Dorsolateral prefrontal cortex (tissue), 120 donors: ENCODE measurements at regions of chr17 and their contacts with region 1.

Region 1: DNA sequence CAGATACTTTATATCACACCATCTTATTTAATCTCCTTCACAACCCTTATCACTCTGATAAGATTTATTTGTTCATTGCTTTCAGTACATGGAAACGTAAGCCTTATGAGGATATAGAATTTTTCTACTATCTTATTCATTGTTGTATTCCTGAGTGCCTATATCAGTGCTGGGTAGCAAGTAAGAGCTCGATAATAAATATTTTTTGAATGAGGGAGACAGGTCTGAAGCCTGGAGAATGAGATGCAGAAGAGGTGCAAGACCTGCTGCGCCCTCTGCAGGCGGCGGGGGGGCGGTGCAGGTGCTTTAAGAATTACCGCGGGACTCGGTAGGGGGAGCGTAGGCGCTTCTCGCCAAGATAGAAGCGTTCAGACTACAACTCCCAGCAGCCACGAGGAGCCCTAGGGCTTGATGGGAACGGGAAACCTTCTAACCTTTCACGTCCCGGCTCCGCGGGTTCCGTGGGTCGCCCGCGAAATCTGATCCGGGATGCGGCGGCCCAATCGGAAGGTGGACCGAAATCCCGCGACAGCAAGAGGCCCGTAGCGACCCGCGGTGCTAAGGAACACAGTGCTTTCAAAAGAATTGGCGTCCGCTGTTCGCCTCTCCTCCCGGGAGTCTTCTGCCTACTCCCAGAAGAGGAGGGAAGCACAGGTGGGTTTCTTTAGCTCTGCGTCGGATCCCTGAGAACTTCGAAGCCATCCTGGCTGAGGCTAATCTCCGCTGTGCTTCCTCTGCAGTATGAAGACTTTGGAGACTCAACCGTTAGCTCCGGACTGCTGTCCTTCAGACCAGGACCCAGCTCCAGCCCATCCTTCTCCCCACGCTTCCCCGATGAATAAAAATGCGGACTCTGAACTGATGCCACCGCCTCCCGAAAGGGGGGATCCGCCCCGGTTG is at the start of gene WRAP53:
- DNase-seq: peak; percentile 97 to 99 (median 98)
- H3K4me3 ChIP-seq: peak within 1 kb of the TSS; percentile 59 to 99 (median 86)
- H3K27ac ChIP-seq: peak within 1 kb of the TSS; percentile 92 to 100 (median 100)
- H3K27me3 ChIP-seq: no peaks in the 10 kb centered on the region
- CTCF ChIP-seq: peak; percentile 94 to 100 (median 99)
- total RNA-seq, gene WRAP53: 5.1 to 15.5 (median 8.1) TPM

Region 2: DNA sequence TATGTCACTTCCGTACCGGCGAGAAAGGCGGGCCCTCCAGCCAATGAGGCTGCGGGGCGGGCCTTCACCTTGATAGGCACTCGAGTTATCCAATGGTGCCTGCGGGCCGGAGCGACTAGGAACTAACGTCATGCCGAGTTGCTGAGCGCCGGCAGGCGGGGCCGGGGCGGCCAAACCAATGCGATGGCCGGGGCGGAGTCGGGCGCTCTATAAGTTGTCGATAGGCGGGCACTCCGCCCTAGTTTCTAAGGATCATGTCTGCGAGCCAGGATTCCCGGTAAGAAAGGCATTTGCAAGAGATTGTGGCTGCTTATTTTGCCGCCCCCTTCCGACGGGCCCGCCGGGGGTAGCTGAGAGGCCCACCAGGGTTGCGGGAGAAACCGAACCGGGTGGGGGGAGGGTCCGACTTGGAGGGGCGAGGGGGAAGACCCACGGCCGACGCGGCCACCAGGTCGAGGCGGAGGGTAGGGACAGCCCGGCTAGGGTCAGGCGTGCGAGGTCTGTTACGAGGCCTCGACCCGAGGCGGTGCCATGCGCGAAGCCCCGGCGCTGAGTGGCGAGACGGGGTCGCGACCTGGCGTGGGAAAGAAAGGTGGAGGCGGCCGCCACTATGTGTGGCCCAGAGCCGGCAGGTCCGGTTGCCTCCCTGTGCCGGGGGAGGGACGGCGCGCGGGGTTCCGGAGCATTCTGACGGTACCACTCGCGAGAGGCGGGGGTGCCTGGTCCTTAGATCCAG is 115.4 kb before region 1 on chr17:
- intact Hi-C with region 1: loop called in 1 of 2 experiments (anchors 2 kb)
- DNase-seq: peak in 9 of 10 donors; percentile 99 to 100 (median 100)
- H3K4me3 ChIP-seq: peak overlapping the region; percentile 64 to 100 (median 99)
- H3K27ac ChIP-seq: peak overlapping the region; percentile 86 to 100 (median 98)
- H3K27me3 ChIP-seq: no peaks in the 10 kb centered on the region
- CTCF ChIP-seq: peak in 17 of 56 donors; percentile 4 to 42 (median 16)

Region 3: GRCh38 chr17:7614422-7615264 is 73.5 kb before region 1 on chr17 and contains the start of gene FXR2:
- intact Hi-C with region 1: loop called in 1 of 2 experiments (anchors 1 kb)
- DNase-seq: peak; percentile 99 to 100 (median 100)
- H3K4me3 ChIP-seq: peak within 1 kb of the TSS; percentile 70 to 97 (median 91)
- H3K27ac ChIP-seq: peak within 1 kb of the TSS; percentile 60 to 98 (median 93)
- H3K27me3 ChIP-seq: no peaks in the 10 kb centered on the region
- CTCF ChIP-seq: peak in 55 of 56 donors; percentile 31 to 86 (median 64)
- total RNA-seq, gene FXR2: 53.1 to 114 (median 73.7) TPM

Region 4: DNA sequence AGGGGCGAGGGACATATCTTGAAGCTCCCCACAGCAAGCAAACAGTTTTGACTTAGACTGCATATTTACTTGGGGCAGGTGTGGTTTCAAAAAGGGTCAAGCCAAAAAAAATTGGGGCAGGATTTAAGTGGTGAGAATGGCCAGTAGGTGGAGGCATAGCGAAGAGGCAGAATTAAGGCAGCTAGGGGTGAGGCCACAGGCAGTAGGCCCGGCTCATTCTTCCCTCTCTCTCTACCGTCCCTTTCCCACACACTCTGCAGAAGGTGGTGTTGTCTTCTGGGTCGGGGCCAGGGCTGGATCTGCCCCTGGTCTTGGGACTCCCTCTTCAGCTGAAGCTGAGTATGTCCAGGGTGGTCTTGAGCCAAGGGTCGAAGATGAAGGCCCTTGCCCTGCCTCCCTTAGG is 55.7 kb before region 1 on chr17:
- intact Hi-C with region 1: loop called (anchors 5 kb)
- DNase-seq: no peak
- H3K4me3 ChIP-seq: no peak overlapping the region
- H3K27ac ChIP-seq: peak overlapping the region in 15 of 59 donors; percentile 6 to 63 (median 41)
- H3K27me3 ChIP-seq: no peaks in the 10 kb centered on the region
- CTCF ChIP-seq: peak in 46 of 56 donors; percentile 16 to 62 (median 38)

Region 5: DNA sequence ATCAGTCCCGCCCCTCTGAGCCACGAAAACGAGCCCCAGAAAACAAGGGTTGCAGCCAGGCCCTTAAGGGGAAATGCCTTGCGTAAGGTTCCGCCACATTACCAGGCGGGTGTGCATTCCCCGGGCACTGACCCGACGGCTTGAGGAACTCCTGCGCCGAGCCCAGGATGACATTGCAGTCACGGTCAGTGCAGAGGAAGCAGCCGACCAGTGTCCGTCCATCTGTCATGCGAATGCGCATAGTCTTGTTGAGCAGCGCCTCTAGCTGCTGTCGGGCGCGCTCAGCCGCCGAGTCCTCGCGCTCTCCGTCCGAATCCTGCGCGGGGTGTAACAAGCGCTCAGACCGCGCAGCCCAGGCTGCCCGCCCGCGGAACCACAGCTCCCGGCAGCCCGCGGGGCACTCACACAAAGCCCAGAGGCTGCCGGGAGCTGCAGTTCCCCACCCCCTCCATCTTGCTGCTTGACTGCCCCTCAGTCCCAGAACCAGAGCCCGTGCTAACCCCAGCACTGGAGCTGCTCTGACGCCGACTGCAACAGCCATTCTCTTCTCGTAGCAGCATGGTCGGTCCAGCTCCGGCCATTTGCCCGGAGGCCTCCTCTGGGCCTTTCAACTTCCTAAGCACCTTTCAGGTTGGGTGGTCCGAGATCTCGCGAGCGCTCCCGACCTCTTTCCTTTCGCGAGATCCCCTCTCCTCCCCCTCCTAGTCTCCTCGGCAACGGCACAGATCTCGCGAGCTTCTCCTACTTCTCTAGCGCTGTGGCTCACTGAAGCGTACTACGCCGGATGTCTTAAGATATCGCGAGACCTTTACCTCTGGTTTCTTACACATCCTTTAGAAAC is 168.9 kb after region 1 on chr17 and contains the start of gene NAA38:
- intact Hi-C with region 1: loop called in 1 of 2 experiments (anchors 5 kb)
- DNase-seq: peak; percentile 91 to 99 (median 95)
- H3K4me3 ChIP-seq: peak within 1 kb of the TSS; percentile 63 to 99 (median 86)
- H3K27ac ChIP-seq: peak within 1 kb of the TSS; percentile 87 to 99 (median 97)
- H3K27me3 ChIP-seq: no peaks in the 10 kb centered on the region
- CTCF ChIP-seq: peak; percentile 29 to 83 (median 62)
- total RNA-seq, gene NAA38: 46.8 to 127 (median 87.8) TPM

Region 6: GRCh38 chr17:7931709-7932482 is 243.7 kb after region 1 on chr17 and contains the starts of genes CNTROB and TRAPPC1:
- intact Hi-C with region 1: no loop called
- DNase-seq: peak; percentile 99 to 100 (median 100)
- H3K4me3 ChIP-seq: peak within 1 kb of the TSS; percentile 73 to 99 (median 89)
- H3K27ac ChIP-seq: peak within 1 kb of the TSS in 53 of 59 donors; percentile 6 to 93 (median 75)
- H3K27me3 ChIP-seq: no peaks in the 10 kb centered on the region
- CTCF ChIP-seq: peak in 23 of 56 donors; percentile 10 to 51 (median 23)
- total RNA-seq, gene CNTROB: 13.4 to 35.9 (median 20.7) TPM
- total RNA-seq, gene TRAPPC1: 58.5 to 141 (median 98.0) TPM